ENCODE measurements at regions of chr14 and their contacts with region 1.

Region 1: DNA sequence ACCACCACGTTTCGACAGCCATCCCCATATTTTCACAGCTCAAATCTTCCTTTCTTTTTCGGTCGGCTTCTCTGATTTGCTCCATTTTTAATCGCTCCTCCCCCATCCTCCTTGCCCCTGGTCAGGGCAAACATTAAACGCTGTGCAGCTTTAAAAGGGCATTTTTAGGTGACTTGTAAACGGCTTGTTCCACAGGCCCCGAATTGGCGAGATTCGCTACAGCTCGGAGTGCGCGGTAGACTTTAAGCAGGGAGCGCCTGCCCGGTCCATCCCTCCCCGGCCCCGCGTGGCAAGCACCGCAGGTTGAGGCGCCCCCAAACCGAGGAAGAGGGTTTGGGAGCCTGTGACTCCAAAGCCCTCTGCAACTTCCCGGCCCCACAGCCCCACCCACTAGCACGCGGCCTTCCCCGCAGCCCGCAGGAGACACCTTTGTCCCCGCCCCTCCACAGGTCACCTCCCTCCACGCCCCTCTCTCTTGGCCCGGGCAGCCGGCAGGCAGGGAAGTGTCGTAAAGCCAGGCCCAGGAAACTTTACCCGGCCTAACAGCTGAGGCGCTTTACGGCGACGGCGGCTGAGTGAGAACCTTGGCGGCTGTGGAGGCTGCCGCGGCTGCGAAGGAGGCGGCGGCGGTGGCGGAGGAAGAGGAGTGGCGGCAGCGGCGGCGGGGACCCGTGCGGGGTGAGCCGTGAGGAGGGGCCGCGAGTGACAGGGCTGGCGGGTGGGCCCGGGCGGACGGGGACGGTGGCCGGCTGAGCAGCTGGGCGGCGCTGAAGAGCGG is at the start of gene NAA30:
- DNase-seq: peak; percentile 82 to 97 (median 92)
- ATAC-seq: peak; percentile 93
- H3K4me3 ChIP-seq: peak within 1 kb of the TSS; percentile 46 to 83
- H3K4me3 Mint-ChIP-seq: peak within 1 kb of the TSS; percentile 94
- H3K27ac ChIP-seq: peak within 1 kb of the TSS; percentile 48 to 82
- H3K27ac Mint-ChIP-seq: peak within 1 kb of the TSS; percentile 94
- H3K4me1 ChIP-seq: peaks cover 27% of the 10 kb centered on the region
- H3K4me1 Mint-ChIP-seq: peaks cover 42% of the 10 kb centered on the region
- H3K27me3 ChIP-seq: no peaks in the 10 kb centered on the region
- H3K27me3 Mint-ChIP-seq: no peaks in the 10 kb centered on the region
- CTCF ChIP-seq: no peak
- total RNA-seq, gene NAA30: 26.4 to 31.2 TPM

Region 2: DNA sequence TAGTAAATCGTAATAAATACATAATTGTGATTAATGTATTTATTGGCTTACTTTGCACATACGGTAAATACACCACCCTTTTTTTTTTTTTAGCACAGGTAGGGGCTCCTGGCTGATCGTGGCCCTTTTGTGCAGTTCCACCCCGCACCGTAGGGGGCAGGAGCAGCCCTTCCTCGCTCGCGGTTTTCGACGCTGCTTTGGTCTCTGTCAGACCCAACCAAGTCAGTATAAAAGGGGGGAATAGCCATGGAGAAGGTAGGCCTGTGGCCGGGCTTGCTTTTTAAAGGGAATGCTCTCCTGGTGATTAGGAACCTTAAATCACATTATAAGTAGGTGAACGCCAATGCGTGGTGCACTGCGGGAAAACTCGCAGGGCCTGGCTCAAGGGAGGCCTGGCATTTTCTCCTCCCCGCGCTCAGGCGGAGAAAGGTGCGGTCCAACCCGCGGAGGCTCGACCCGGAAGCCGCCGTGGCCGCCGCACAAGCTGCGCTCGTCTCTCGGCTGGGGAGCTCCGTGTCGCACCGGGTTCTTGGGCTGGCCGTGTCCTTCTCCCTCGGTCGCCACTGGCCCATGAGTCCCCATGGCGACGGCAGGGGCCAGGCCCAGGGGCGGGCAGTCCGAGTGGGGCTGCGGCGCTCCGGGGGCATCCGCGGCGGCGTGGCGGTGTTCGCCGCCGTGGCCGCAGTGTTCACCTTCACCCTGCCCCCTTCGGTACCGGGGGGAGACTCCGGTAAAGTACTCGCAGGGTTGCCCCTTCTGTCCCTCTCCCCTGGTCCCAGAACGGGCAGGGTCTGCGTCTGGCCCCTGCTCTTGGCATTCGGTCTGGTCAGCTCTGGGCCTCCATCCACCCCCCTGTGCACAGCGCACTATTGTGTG is 810.6 kb before region 1 on chr14 and contains the start of gene TMEM260:
- CTCF ChIA-PET with region 1: no interaction called
- POLR2A ChIA-PET with region 1: interaction called, 6 read pairs
- intact Hi-C with region 1: loop called (anchors 1 to 2 kb)
- DNase-seq: peak; percentile 84 to 95 (median 91)
- ATAC-seq: peak; percentile 93
- H3K4me3 ChIP-seq: peak within 1 kb of the TSS; percentile 74 to 83
- H3K4me3 Mint-ChIP-seq: peak within 1 kb of the TSS; percentile 90
- H3K27ac ChIP-seq: peak within 1 kb of the TSS; percentile 72 to 75
- H3K27ac Mint-ChIP-seq: peak within 1 kb of the TSS; percentile 94
- H3K4me1 ChIP-seq: peaks cover 27% of the 10 kb centered on the region
- H3K4me1 Mint-ChIP-seq: peaks cover 40% of the 10 kb centered on the region
- H3K27me3 ChIP-seq: no peaks in the 10 kb centered on the region
- H3K27me3 Mint-ChIP-seq: peaks cover 2% of the 10 kb centered on the region
- CTCF ChIP-seq: peak; percentile 82
- total RNA-seq, gene TMEM260: 4.3 to 6.4 TPM

Region 3: DNA sequence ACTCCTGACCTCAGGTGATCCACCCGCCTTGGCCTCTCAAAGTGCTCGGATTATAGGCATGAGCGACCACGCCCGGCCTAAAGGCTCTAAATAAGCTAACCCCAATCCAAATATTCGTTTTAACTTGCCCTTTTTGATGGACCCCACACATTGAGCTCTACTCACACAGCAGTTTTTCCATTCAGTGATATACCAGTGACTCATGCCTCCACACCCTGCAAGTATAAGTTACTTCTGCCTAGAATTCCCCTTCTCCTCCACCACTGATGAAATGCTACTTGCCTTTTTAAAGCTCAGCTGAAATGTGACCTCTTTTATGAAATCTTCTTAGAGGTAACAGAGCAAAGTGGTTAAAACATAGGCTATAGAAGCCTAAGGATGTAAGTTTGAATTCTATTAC is 190.3 kb before region 1 on chr14:
- CTCF ChIA-PET with region 1: no interaction called
- POLR2A ChIA-PET with region 1: no interaction called
- intact Hi-C with region 1: loop called in 1 of 2 experiments (anchors 10 kb)
- DNase-seq: no peak
- ATAC-seq: no peak
- H3K4me3 ChIP-seq: no peak overlapping the region
- H3K4me3 Mint-ChIP-seq: no peak overlapping the region
- H3K27ac ChIP-seq: no peak overlapping the region
- H3K27ac Mint-ChIP-seq: no peak overlapping the region
- H3K4me1 ChIP-seq: no peaks in the 10 kb centered on the region
- H3K4me1 Mint-ChIP-seq: no peaks in the 10 kb centered on the region
- H3K27me3 ChIP-seq: no peaks in the 10 kb centered on the region
- H3K27me3 Mint-ChIP-seq: peaks cover 5% of the 10 kb centered on the region
- CTCF ChIP-seq: no peak

Region 4: DNA sequence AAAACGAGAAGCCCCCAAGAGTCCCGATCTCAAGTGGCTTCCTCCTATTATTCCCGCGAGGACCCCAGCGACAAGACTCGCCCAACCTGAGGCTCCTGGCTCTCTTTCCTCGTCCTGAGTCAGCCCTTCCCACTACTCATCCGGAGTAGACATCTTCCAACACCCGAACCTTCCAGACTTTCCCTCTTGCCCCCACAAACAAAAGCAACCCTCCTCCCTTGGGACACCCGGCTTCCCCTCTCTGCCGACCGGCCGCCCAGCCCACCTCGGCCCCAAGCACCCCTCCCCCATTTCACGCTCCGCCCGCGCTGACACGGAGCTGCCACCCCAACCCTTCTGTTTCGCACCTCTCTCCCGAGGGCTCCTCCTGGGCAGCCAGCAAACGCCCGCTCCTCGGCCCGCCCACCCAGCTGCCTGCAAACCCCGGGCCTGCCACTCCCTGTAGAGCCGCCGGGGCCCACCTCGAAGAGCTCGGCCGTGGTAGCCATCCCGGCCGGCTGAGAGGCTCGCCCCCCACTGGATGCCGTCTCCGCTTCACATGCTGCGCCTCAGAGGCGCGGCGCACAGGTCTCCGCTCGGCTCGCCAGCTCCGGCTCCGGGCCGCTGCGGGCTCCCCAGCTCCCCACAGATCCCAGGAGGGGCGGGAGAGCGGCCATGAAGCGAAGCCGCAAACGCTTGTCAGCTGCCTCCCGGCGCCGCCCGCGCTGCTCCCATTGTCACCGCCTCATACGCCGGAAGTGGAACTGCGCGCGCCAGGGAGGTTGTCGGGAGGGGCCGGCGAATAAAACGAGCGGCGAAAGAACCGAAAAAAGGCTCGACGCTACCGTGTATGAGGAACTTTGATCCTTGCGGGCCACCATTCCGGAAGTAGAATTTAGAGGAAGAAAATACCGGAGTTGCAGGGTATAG is 121.8 kb before region 1 on chr14 and contains the starts of genes AP5M1 and EXOC5:
- CTCF ChIA-PET with region 1: interaction called, 3 read pairs
- POLR2A ChIA-PET with region 1: interaction called, 19 read pairs
- intact Hi-C with region 1: loop called (anchors 1 kb)
- DNase-seq: peak; percentile 80 to 97 (median 91)
- ATAC-seq: peak; percentile 80
- H3K4me3 ChIP-seq: peak within 1 kb of the TSS; percentile 77 to 84
- H3K4me3 Mint-ChIP-seq: peak within 1 kb of the TSS; percentile 99
- H3K27ac ChIP-seq: peak within 1 kb of the TSS; percentile 85 to 90
- H3K27ac Mint-ChIP-seq: peak within 1 kb of the TSS; percentile 100
- H3K4me1 ChIP-seq: peaks cover 35% of the 10 kb centered on the region
- H3K4me1 Mint-ChIP-seq: peaks cover 70% of the 10 kb centered on the region
- H3K27me3 ChIP-seq: no peaks in the 10 kb centered on the region
- H3K27me3 Mint-ChIP-seq: no peaks in the 10 kb centered on the region
- CTCF ChIP-seq: no peak
- total RNA-seq, gene AP5M1: 38.5 to 42.4 TPM
- total RNA-seq, gene EXOC5: 17.0 to 17.8 TPM

Region 5: DNA sequence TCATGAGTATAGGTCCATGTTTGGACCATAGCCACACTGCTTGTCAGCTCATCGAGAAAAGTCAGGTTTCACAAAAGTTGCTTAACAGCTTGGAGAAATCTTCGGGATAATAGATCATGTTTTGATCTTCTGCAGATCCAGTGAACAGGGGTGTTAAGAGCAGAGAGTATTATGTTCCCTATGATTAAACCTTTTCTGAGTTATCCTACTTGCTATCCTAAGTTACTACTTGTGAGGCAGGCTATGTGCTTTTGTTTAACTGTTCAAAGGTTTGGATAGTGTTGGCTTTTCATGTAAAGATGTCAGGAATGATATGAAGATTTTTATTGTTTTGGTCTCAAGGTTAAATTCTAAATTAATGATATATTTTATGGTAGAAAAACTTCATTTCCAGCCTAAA is 11.3 kb after region 1 on chr14:
- CTCF ChIA-PET with region 1: interaction called, 4 read pairs
- POLR2A ChIA-PET with region 1: interaction called, 12 read pairs
- intact Hi-C with region 1: no loop called
- DNase-seq: no peak
- ATAC-seq: no peak
- H3K4me3 ChIP-seq: no peak overlapping the region
- H3K4me3 Mint-ChIP-seq: no peak overlapping the region
- H3K27ac ChIP-seq: no peak overlapping the region
- H3K27ac Mint-ChIP-seq: no peak overlapping the region
- H3K4me1 ChIP-seq: peaks cover 7% of the 10 kb centered on the region
- H3K4me1 Mint-ChIP-seq: peaks cover 44% of the 10 kb centered on the region
- H3K27me3 ChIP-seq: no peaks in the 10 kb centered on the region
- H3K27me3 Mint-ChIP-seq: no peaks in the 10 kb centered on the region
- CTCF ChIP-seq: no peak

Region 6: GRCh38 chr14:57464013-57464730 is 74.0 kb after region 1 on chr14:
- CTCF ChIA-PET with region 1: no interaction called
- POLR2A ChIA-PET with region 1: no interaction called
- intact Hi-C with region 1: no loop called
- DNase-seq: no peak
- ATAC-seq: no peak
- H3K4me3 ChIP-seq: no peak overlapping the region
- H3K4me3 Mint-ChIP-seq: no peak overlapping the region
- H3K27ac ChIP-seq: no peak overlapping the region
- H3K27ac Mint-ChIP-seq: no peak overlapping the region
- H3K4me1 ChIP-seq: no peaks in the 10 kb centered on the region
- H3K4me1 Mint-ChIP-seq: no peaks in the 10 kb centered on the region
- H3K27me3 ChIP-seq: peaks cover 0 to 2% of the 10 kb centered on the region in 2 experiments
- H3K27me3 Mint-ChIP-seq: peaks cover 4% of the 10 kb centered on the region
- CTCF ChIP-seq: no peak

Region 7: DNA sequence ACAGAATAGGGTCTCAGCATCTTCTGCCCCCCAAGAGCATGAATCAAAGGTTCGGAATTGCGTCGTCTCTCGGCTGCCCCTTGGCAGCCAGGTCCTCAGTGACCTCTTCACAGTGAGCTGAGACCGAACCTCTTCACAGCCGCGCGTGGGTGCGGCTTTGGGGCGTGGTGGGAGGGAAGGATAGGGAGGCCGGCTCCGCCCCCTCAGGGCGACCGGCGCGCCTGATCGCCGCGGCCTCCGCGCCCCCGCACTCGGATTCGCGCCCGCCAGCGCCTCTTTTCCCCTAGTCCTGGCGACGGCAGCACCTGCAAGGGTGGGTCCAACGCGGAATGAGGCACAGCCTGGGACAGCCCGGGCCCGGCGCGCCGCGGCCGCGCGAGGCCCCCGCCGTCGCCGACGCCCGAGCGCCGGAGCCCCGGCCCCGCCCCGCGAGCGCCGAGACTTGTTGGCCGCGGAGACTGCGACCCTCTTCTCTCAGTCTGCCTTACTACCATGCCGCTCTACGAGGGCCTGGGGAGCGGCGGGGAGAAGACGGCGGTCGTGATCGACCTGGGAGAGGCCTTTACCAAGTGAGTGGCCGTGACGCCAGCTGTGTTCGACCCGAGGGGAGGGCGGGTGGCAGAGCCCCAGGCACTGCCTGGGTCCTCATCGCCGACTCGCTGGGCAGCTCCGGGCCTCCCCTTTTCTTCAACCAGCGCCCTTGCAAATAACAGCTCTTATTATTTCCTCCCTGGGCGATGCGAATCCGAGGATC is 809.7 kb after region 1 on chr14 and contains the start of gene ACTR10:
- CTCF ChIA-PET with region 1: no interaction called
- POLR2A ChIA-PET with region 1: no interaction called
- intact Hi-C with region 1: loop called in 1 of 2 experiments (anchors 5 kb)
- DNase-seq: peak; percentile 76 to 95 (median 85)
- ATAC-seq: peak; percentile 87
- H3K4me3 ChIP-seq: peak within 1 kb of the TSS; percentile 75 to 92
- H3K4me3 Mint-ChIP-seq: peak within 1 kb of the TSS; percentile 94
- H3K27ac ChIP-seq: peak within 1 kb of the TSS; percentile 86 to 87
- H3K27ac Mint-ChIP-seq: peak within 1 kb of the TSS; percentile 98
- H3K4me1 ChIP-seq: peaks cover 25% of the 10 kb centered on the region
- H3K4me1 Mint-ChIP-seq: peaks cover 46% of the 10 kb centered on the region
- H3K27me3 ChIP-seq: no peaks in the 10 kb centered on the region
- H3K27me3 Mint-ChIP-seq: no peaks in the 10 kb centered on the region
- CTCF ChIP-seq: no peak
- total RNA-seq, gene ACTR10: 47.5 to 47.7 TPM

Region 8: DNA sequence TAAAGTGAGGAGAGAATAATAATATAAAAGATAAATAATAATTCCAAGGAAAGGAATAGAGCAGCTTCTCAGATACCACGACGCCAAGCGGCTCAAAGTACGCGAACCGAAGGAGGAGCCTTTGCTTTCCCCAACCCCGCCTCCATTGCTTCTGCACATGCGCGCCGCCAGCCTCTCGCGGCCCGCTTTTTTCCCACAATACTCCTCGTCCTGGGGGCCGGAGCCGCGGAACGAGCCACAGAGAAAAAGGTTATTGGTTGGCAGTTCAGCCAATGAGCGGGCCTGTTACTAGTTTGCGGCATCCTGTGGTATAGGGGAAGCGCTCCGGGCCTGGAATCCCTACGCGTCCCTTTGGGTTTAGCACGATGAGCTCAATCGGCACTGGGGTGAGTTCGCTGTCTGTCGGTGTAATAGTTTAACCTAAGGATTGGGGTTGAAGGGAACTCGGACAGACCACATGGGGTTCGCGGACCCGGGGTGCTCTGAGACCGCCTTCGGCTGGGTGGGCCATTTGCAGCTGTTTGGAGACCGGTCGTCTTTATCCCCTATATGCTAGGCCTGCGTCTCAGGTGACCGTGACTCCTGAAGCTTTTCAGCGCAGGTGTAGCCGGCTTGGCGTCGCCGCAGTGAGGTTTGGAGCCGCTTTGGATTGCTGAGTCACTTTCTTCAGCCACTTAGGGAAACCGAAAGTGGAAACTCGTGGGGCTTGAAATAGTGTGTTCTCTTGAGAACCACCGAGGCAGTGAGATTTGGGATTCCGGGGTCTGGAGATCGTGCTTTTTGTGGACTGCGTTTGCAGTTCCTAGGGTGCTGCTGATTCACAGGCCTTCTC is 854.6 kb after region 1 on chr14 and contains the start of gene PSMA3:
- CTCF ChIA-PET with region 1: no interaction called
- POLR2A ChIA-PET with region 1: no interaction called
- intact Hi-C with region 1: loop called in 1 of 2 experiments (anchors 5 kb)
- DNase-seq: peak; percentile 94 to 98 (median 98)
- ATAC-seq: peak; percentile 83
- H3K4me3 ChIP-seq: peak within 1 kb of the TSS; percentile 92 to 93
- H3K4me3 Mint-ChIP-seq: peak within 1 kb of the TSS; percentile 99
- H3K27ac ChIP-seq: peak within 1 kb of the TSS; percentile 91 to 96
- H3K27ac Mint-ChIP-seq: peak within 1 kb of the TSS; percentile 98
- H3K4me1 ChIP-seq: peaks cover 30% of the 10 kb centered on the region
- H3K4me1 Mint-ChIP-seq: peaks cover 49% of the 10 kb centered on the region
- H3K27me3 ChIP-seq: no peaks in the 10 kb centered on the region
- H3K27me3 Mint-ChIP-seq: no peaks in the 10 kb centered on the region
- CTCF ChIP-seq: no peak
- total RNA-seq, gene PSMA3: 105 to 106 TPM